ENCODE measurements at regions of chr11 and their contacts with region 1.

Region 1: GRCh38 chr11:28820296-28820989 is 712.3 kb downstream of the METTL15 start:
- DNase-seq: no peak
- H3K4me3 ChIP-seq: no peak overlapping the region
- H3K27ac ChIP-seq: no peak overlapping the region
- H3K4me1 ChIP-seq: no peaks in the 10 kb centered on the region
- H3K27me3 ChIP-seq: no peaks in the 10 kb centered on the region
- CTCF ChIP-seq: no peak
- EP300 ChIP-seq: no peak
- POLR2A ChIP-seq: no peak

Region 2: DNA sequence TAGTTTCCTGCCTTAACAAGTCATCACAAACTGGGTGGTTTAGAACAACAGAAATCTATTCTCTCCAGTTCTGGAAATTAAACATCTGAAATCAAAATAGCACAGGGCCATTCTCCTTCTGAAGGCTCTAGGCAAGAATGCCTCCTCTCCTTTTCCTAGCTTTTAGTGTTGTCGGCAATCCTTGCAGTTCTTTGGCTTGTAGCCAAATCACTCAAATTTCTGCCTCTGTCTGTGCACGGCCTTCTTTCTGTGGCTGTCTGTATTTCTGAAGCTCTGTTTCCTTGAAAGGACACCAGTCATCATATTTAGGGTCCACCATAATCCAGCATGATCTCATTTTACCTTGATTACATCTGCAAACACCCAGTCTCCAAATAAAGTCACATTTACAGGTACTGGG is 83.3 kb after region 1 on chr11:
- in situ Hi-C with region 1: loop called in 1 of 4 experiments (anchors 25 kb)
- intact Hi-C with region 1: no loop called
- DNase-seq: no peak
- H3K4me3 ChIP-seq: no peak overlapping the region
- H3K27ac ChIP-seq: no peak overlapping the region
- H3K4me1 ChIP-seq: no peaks in the 10 kb centered on the region
- H3K27me3 ChIP-seq: no peaks in the 10 kb centered on the region
- CTCF ChIP-seq: no peak
- EP300 ChIP-seq: no peak
- POLR2A ChIP-seq: no peak

Measured in transverse colon (tissue), 4 donors.